CD8-positive, alpha-beta T cell (primary cell): ENCODE measurements at regions of chr11 and their contacts with region 1.

Region 1: GRCh38 chr11:14454861-14455632 is 44.6 kb downstream of the COPB1 start:
- DNase-seq: peak in 2 of 9 experiments; percentile 50 to 61
- ATAC-seq: peak; percentile 52
- H3K4me3 ChIP-seq: no peak overlapping the region
- H3K4me3 Mint-ChIP-seq: no peak overlapping the region
- H3K27ac ChIP-seq: no peak overlapping the region
- H3K27ac Mint-ChIP-seq: no peak overlapping the region
- H3K4me1 ChIP-seq: no peaks in the 10 kb centered on the region
- H3K4me1 Mint-ChIP-seq: no peaks in the 10 kb centered on the region
- H3K27me3 ChIP-seq: no peaks in the 10 kb centered on the region
- H3K27me3 Mint-ChIP-seq: no peaks in the 10 kb centered on the region
- CTCF ChIP-seq: peak; percentile 75

Region 2: DNA sequence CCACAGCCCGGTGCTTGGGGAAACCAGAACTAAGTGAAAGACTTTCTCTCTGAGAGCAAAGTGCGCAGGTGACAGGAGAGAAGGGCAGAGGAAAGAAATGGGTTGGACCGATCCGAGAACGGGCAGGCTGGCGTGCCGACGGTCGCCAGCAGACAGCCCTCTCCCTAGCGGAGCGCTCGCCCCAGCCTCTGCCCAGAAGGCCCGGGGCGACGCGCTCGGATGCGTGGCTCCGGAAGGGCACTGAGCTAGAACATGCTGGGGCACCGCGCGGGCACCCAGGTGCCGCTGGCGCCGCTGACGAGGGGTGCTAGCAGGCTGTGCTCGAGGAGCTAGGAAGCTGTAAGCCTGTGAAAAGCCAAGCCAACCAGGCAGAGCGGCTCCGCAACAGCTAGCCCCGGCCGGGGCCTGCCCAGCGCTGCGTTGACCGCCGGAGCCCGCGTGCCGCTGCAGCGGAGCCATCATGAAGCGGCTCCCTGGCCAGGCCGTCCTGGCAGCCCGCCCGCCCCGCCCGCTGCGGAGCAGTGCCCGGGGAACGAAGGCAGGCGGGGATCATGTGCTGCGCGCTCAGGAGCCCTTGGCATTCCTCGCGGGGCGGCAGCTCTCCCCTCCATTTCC is 74.0 kb before region 1 on chr11:
- CTCF ChIA-PET with region 1: interaction called, 5 read pairs
- POLR2A ChIA-PET with region 1: no interaction called
- intact Hi-C with region 1: loop called (anchors 5 to 10 kb)
- DNase-seq: peak; percentile 24 to 74 (median 52)
- ATAC-seq: peak; percentile 90
- H3K4me3 ChIP-seq: peak overlapping the region; percentile 47 to 50
- H3K4me3 Mint-ChIP-seq: peak overlapping the region; percentile 82
- H3K27ac ChIP-seq: peak overlapping the region in 1 of 2 experiments; percentile 17
- H3K27ac Mint-ChIP-seq: no peak overlapping the region
- H3K4me1 ChIP-seq: no peaks in the 10 kb centered on the region
- H3K4me1 Mint-ChIP-seq: peaks cover 4% of the 10 kb centered on the region
- H3K27me3 ChIP-seq: peaks cover 0 to 4% of the 10 kb centered on the region in 2 experiments
- H3K27me3 Mint-ChIP-seq: peaks cover 10% of the 10 kb centered on the region
- CTCF ChIP-seq: no peak